ENCODE measurements at regions of chr1 and their contacts with region 1.

Region 1: DNA sequence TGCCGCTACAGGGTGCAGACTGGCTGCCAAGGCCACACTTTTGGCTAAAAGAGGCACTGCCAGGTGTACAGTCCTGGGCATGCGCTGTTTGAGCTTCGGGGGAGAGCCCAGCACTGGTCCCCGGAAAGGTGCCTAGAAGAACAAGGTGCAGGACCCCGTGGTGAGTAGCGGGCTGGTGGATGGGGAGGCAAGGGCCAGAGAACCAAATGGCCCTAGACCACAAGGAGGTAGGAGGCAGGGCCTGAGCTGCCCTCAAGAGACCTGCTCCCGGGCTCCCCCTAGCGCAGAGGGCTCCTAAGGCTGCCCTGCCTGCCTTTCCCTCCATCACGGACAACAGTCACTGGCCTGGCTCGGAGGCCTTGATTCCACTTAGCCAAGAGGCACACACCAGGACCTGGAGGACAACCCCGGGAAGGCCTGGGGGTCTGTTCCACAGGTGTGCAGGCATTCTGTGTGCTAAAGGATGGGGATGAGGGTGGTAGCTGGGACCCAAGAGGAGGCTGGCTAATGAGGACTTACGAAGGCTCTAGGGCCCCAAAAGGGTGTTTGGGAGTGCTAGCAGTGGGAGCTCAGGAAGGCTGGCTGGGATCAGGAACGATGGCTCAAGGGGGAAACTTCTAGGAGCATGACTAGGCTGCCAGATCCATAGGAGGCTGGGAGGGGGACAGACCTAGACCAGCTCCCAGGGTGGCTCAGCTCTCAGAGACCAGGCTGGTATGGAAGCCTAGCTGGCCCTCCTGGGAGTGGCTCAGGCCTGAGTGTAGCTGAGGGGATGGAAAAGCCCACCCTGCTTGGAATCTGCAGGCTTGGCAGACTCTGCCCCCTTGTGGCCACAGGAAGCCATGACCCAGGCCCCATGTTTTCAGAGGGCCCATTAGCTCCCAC is 742 bp downstream of the ARTN start:
- DNase-seq: no peak
- ATAC-seq: peak; percentile 92
- H3K4me3 ChIP-seq: peak overlapping the region; percentile 60
- H3K27ac ChIP-seq: no peak overlapping the region
- H3K4me1 ChIP-seq: peaks cover 11% of the 10 kb centered on the region
- H3K27me3 ChIP-seq: no peaks in the 10 kb centered on the region
- CTCF ChIP-seq: peak; percentile 84 to 92 (median 85)
- EP300 ChIP-seq: no peak
- POLR2A ChIP-seq: no peak
- RAD21 ChIP-seq: peak; percentile 80

Region 2: DNA sequence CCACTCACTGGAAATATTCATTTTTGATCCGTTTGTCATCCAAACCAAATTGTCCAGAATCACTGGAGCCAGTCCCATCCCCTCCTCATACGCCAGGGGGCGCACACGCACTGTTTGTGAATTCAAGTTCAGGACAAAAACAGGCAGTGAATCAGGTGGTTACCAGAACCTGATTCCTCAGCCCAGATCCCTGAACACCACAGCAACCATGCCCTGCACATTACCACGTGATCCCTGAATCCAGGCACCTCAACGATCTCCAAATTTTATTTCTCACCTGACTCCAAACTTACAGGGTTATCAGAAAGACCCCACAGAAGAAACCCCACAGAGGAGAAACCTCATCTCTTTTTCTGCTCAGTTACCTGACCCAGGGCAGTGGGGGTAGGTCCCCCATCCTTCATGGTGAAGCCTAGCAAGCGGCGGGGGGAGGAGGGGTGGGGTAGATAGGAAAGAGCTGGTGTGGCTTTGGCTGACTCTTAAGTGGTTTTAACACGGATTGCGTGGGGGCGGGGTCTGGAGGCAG is 405.1 kb before region 1 on chr1:
- CTCF ChIA-PET with region 1: interaction called, 47 read pairs
- POLR2A ChIA-PET with region 1: no interaction called
- RAD21 ChIA-PET with region 1: interaction called, 17 read pairs
- SMC1A ChIA-PET with region 1: interaction called, 15 read pairs
- in situ Hi-C with region 1: loop called (anchors 5 kb)
- intact Hi-C with region 1: loop called (anchors 2 kb)
- DNase-seq: peak; percentile 30
- ATAC-seq: peak; percentile 91
- H3K4me3 ChIP-seq: no peak overlapping the region
- H3K27ac ChIP-seq: no peak overlapping the region
- H3K4me1 ChIP-seq: no peaks in the 10 kb centered on the region
- H3K27me3 ChIP-seq: peaks cover 7 to 11% of the 10 kb centered on the region in 2 experiments
- CTCF ChIP-seq: peak; percentile 91 to 95 (median 95); a peak in 5 of 6 replicates
- EP300 ChIP-seq: no peak
- POLR2A ChIP-seq: no peak
- RAD21 ChIP-seq: peak; percentile 92

Region 3: GRCh38 chr1:43706598-43707495 is 227.5 kb before region 1 on chr1:
- CTCF ChIA-PET with region 1: interaction called, 27 read pairs
- POLR2A ChIA-PET with region 1: no interaction called
- RAD21 ChIA-PET with region 1: interaction called, 5 read pairs
- SMC1A ChIA-PET with region 1: interaction called, 5 read pairs
- in situ Hi-C with region 1: no loop called
- intact Hi-C with region 1: no loop called
- DNase-seq: peak; percentile 67
- ATAC-seq: peak; percentile 97
- H3K4me3 ChIP-seq: peak overlapping the region; percentile 78
- H3K27ac ChIP-seq: peak overlapping the region; percentile 71
- H3K4me1 ChIP-seq: peaks cover 3% of the 10 kb centered on the region; the same call in 1 of the 2 replicates
- H3K27me3 ChIP-seq: no peaks in the 10 kb centered on the region
- CTCF ChIP-seq: no peak
- EP300 ChIP-seq: 0 out of 4 replicates have a peak, but pooled peaks of 1 of the 2 experiments have one; percentile 22
- POLR2A ChIP-seq: peak; percentile 96
- RAD21 ChIP-seq: no peak

Region 4: GRCh38 chr1:43783671-43784205 is 150.6 kb before region 1 on chr1:
- CTCF ChIA-PET with region 1: interaction called, 7 read pairs
- POLR2A ChIA-PET with region 1: no interaction called
- RAD21 ChIA-PET with region 1: interaction called, 6 read pairs
- SMC1A ChIA-PET with region 1: interaction called, 21 read pairs
- in situ Hi-C with region 1: no loop called
- intact Hi-C with region 1: no loop called
- DNase-seq: peak; percentile 84
- ATAC-seq: peak; percentile 87
- H3K4me3 ChIP-seq: no peak overlapping the region
- H3K27ac ChIP-seq: peak overlapping the region; percentile 88
- H3K4me1 ChIP-seq: peaks cover 19% of the 10 kb centered on the region
- H3K27me3 ChIP-seq: no peaks in the 10 kb centered on the region
- CTCF ChIP-seq: no peak
- EP300 ChIP-seq: peak in 1 of 2 experiments; percentile 59; a peak in 2 of 4 replicates
- POLR2A ChIP-seq: no peak
- RAD21 ChIP-seq: no peak

Region 5: DNA sequence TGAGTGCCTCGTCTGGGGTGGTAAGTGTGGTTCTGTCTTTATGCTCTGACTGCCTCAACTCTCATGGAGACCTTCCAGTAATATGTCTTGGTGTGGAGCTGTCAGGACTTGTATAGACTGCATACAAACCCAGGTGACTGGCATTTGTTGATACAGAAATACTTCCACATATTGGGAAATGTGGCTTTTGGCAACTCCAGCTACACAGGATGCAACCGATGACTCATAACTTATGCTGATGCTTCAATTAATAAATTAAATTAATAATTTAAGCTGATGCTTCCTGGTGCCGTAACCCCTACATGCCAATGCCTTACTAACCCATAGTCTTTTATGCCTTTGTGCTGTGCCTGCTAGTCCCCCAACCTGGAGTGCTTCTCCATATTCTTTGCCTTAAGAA is 73.0 kb before region 1 on chr1:
- CTCF ChIA-PET with region 1: interaction called, 10 read pairs
- POLR2A ChIA-PET with region 1: no interaction called
- RAD21 ChIA-PET with region 1: no interaction called
- SMC1A ChIA-PET with region 1: interaction called, 4 read pairs
- in situ Hi-C with region 1: no loop called
- intact Hi-C with region 1: no loop called
- DNase-seq: no peak
- ATAC-seq: no peak
- H3K4me3 ChIP-seq: no peak overlapping the region
- H3K27ac ChIP-seq: no peak overlapping the region
- H3K4me1 ChIP-seq: peaks cover 11% of the 10 kb centered on the region; the same call in 1 of the 2 replicates
- H3K27me3 ChIP-seq: no peaks in the 10 kb centered on the region
- CTCF ChIP-seq: no peak
- EP300 ChIP-seq: no peak
- POLR2A ChIP-seq: no peak
- RAD21 ChIP-seq: no peak

Region 6: DNA sequence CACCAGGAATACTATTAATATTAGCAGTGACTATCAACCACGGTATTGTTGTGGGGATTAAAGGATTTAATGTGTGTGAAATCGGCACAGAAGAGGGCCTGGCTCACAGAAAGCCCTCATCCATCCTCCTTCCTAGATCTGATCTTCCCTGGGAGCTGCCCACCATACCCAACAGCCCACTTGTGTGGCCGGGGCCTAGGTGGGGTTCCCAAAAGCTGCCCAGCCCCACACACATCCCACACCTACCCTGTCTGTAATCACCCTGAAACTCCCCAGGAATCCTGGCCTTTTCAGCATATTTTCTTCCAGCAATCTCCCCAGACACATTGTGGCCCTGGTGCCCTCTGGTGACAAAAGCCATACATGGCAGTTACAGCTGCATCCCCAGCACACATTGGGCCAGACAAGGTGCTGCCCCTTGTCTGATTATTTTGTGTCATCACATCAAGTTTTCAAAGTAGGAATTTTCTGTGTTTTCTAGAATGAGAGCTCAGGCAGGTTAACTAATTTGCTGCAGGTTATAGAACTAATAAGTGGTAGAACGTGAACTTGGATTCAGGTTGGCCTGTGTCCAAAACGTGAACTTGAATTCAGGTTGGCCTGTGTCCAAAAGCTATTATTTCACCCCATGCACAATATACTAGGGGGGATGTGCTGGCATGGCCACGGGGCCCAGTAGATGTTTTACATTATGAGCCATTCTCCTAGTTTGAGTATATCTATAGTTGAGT is 102.2 kb after region 1 on chr1:
- CTCF ChIA-PET with region 1: interaction called, 14 read pairs
- POLR2A ChIA-PET with region 1: no interaction called
- RAD21 ChIA-PET with region 1: interaction called, 7 read pairs
- SMC1A ChIA-PET with region 1: interaction called, 5 read pairs
- in situ Hi-C with region 1: no loop called
- intact Hi-C with region 1: no loop called
- DNase-seq: no peak
- ATAC-seq: peak; percentile 92
- H3K4me3 ChIP-seq: no peak overlapping the region
- H3K27ac ChIP-seq: no peak overlapping the region
- H3K4me1 ChIP-seq: peaks cover 9% of the 10 kb centered on the region; the same call in 1 of the 2 replicates
- H3K27me3 ChIP-seq: no peaks in the 10 kb centered on the region
- CTCF ChIP-seq: peak; percentile 91 to 96 (median 95)
- EP300 ChIP-seq: no peak
- POLR2A ChIP-seq: no peak
- RAD21 ChIP-seq: peak; percentile 83